Activated CD4-positive, alpha-beta T cell treated with anti-CD3 and anti-CD28 coated beads for 36 hours (primary cell): ENCODE measurements at regions of chr6 and their contacts with region 1.

Region 1: DNA sequence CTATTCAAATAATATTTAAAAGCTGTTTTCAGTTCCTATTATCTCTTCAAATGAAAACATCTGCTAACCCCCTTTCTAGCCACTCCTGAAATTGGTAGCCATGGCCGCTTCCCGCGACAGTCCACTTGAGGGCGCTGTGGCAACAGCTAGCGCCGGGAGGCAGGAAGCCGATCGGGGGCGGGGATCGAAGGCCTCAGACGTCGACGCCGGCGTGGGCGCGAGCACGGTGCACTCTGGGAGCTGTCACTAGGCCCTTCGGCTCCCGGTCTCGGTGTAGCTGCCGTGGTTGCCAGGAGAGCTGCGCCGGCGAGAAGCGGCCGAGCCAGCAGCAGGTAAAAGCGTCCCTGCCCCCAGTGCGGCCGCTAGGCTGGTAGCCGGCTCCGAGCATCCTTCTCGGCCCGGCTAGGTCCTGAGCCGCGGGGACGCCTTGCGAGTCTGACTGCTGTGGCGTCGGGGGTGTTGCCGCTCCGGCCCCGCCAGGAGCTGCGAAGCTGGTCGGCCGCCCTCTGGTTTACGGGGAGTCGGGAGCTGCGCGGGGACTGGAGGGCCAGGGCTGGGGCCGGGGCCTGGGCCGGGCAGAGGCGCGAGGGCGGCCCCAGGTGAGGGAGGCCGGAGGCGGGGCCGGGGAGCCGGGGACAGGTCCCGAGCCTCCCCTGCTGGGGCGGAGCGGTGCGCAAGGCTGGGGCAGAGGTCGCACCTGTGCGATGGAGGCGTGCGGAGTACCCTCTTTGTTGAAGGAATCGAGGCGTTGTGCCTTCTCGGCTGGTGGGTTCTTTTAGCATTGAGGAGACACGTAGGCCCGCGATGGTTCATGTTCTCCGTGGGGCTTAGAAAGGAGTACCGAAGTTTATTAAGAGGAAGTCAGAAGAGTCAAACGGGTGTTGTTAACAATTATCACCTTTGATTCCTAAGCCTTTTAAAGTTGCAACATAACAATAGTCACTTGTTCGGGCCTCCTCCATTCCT is at the start of gene DOP1A:
- DNase-seq: peak; percentile 99
- ATAC-seq: peak; percentile 87
- H3K4me3 Mint-ChIP-seq: peak within 1 kb of the TSS; percentile 88
- H3K27ac Mint-ChIP-seq: peak within 1 kb of the TSS; percentile 84
- H3K4me1 Mint-ChIP-seq: peaks cover 47% of the 10 kb centered on the region
- H3K27me3 Mint-ChIP-seq: no peaks in the 10 kb centered on the region
- total RNA-seq, gene DOP1A: 5.4 to 7.3 TPM

Region 2: GRCh38 chr6:81834141-81834681 is 1233.5 kb before region 1 on chr6:
- CTCF ChIA-PET with region 1: no interaction called
- POLR2A ChIA-PET with region 1: no interaction called
- intact Hi-C with region 1: no loop called
- DNase-seq: no peak
- ATAC-seq: no peak
- H3K4me3 Mint-ChIP-seq: no peak overlapping the region
- H3K27ac Mint-ChIP-seq: no peak overlapping the region
- H3K4me1 Mint-ChIP-seq: no peaks in the 10 kb centered on the region
- H3K27me3 Mint-ChIP-seq: peaks cover 3% of the 10 kb centered on the region

Region 3: DNA sequence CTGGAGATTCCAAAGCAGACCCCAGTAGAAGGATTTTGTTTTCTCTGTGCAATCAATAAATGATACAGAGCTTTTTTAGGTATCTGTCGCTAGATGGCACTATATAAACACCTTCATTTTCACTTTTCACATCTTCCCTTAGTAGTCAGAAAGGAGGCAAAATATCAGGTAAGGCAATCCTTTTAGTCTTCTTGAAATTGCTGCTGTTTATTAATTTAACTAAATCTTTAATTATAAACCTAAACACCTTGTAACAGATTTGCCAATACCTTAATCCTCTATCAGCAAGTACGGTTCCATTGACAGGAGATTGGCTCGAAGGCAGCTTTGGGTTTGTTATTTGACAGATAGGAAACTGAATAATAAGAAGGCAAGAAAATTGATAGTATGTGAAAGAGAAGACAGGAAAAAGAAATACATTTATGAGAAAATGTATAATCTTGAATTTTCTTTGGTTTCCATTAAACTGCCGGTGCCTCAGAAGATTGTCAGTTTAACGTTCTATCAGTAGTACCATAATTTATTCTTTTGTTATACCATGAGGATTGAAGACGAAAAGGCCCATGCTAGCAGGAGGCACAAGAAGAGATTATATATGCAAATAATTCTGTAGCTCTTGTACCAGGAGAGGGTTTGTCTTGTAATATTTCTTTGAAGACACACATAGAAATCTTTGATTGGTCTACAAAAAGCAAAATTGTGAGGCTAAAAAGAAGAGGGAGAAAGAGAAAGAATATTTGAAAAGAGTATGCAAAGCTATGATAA is 796.7 kb before region 1 on chr6:
- CTCF ChIA-PET with region 1: interaction called, 15 read pairs
- POLR2A ChIA-PET with region 1: no interaction called
- intact Hi-C with region 1: no loop called
- DNase-seq: no peak
- ATAC-seq: peak; percentile 58
- H3K4me3 Mint-ChIP-seq: no peak overlapping the region
- H3K27ac Mint-ChIP-seq: no peak overlapping the region
- H3K4me1 Mint-ChIP-seq: no peaks in the 10 kb centered on the region
- H3K27me3 Mint-ChIP-seq: peaks cover 2% of the 10 kb centered on the region

Region 4: DNA sequence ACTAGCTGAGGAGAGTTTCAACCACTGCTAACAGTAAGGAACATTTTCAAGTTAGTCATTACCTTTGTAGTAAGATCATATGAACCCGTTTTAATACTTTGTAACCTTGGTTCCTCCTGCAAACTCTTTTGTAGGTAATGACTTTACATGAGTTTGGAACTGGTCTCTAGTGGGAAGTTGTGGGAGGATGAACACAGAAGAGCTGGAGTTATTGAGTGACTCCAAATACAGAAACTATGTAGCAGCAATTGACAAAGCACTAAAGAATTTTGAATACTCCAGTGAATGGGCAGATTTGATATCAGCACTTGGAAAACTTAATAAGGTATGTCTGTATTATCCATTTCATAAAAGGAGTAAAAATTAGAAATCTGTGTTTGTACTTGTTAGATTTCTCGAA is 29.1 kb after region 1 on chr6:
- CTCF ChIA-PET with region 1: interaction called, 10 read pairs
- POLR2A ChIA-PET with region 1: no interaction called
- intact Hi-C with region 1: no loop called
- DNase-seq: no peak
- ATAC-seq: no peak
- H3K4me3 Mint-ChIP-seq: no peak overlapping the region
- H3K27ac Mint-ChIP-seq: no peak overlapping the region
- H3K4me1 Mint-ChIP-seq: peaks cover 4% of the 10 kb centered on the region
- H3K27me3 Mint-ChIP-seq: no peaks in the 10 kb centered on the region

Region 5: DNA sequence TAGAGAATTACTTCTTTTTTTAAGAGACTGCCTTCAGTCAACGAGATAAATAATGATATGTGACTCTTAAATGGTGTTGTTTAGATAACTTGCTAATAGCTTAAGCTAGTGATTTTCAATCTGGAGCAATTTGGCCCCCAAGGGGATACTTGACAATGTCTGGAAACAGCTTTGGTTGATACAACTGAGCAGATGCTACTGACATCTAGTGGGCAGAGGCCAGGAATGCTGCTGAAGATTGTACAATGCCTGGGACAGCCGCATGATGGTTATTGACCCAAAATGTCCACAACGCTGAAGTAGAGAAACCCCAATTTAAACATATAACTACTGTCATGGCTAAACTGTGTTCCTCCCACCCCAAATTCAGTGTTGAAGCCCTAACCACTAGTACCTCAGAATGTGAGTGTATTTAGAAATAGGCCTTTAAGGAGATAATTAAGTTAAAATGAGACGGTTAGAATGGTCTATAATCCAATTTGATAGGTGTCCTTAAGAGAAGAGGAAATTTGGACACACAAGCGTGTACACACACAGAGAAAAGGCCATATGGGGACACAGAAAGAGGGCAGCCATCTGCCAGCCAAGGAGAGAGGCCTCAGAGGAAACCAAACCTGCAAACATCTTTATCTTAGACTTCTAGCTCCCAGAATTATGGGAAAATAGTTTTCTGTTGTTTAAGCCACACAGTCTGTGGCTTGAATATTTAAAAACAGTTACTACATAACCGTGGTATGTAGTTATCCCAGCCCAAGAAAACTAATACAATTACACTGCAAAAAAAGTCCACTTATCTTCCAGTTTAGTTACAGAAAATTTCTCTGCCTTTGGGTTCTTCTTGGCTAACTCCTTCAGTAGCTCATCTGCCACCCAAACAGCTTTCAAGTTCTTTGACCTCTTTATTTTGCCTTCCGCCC is 147.7 kb after region 1 on chr6:
- CTCF ChIA-PET with region 1: interaction called, 101 read pairs
- POLR2A ChIA-PET with region 1: no interaction called
- intact Hi-C with region 1: loop called (anchors 1 kb)
- DNase-seq: peak; percentile 72
- ATAC-seq: peak; percentile 99
- H3K4me3 Mint-ChIP-seq: no peak overlapping the region
- H3K27ac Mint-ChIP-seq: no peak overlapping the region
- H3K4me1 Mint-ChIP-seq: peaks cover 2% of the 10 kb centered on the region
- H3K27me3 Mint-ChIP-seq: peaks cover 10% of the 10 kb centered on the region

Region 6: DNA sequence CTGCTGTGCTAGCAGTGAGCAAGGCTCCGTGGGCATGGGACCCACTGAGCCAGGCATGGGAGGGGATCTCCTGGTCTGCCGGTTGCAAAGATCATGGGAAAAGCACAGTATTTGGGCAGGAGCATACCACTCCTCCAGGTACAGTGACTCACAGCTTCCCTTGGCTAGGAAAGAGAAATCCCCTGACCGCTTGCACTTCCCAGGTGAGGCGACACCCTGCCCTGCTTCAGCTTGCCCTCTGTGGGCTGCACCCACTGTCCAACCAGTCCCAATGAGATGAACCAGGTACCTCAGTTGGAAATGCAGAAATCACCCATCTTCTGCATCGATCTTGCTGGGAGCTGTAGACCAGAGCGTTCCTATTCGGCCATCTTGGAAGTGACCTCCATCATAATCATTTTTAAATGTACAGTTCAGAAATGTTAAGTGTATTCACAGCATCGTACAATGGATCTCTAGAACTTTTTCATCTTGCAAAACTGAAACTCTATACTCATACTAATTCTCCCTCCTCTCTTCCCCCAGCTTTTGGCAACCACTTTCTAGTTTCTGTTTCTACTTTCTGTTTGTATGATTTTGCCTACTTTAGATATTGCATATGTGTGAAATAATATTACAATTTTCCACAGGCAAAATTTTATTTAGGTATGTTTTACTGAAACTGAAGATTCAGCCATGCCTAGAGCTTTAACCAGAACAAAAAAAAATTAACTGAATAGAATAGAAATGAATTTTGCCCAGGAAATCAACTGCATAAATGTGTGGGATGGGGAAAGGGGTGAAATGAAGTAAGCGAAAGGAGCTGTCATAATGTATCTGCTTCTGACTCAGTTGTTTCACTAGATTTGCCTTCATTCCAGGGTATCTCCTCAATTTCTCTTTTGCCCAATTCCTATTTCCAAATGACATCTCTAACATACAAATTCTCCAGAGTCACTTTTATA is 225.4 kb after region 1 on chr6:
- CTCF ChIA-PET with region 1: no interaction called
- POLR2A ChIA-PET with region 1: no interaction called
- intact Hi-C with region 1: loop called in 1 of 2 experiments (anchors 2 kb)
- DNase-seq: no peak
- ATAC-seq: peak; percentile 90
- H3K4me3 Mint-ChIP-seq: no peak overlapping the region
- H3K27ac Mint-ChIP-seq: no peak overlapping the region
- H3K4me1 Mint-ChIP-seq: peaks cover 11% of the 10 kb centered on the region
- H3K27me3 Mint-ChIP-seq: peaks cover 46% of the 10 kb centered on the region

Region 7: DNA sequence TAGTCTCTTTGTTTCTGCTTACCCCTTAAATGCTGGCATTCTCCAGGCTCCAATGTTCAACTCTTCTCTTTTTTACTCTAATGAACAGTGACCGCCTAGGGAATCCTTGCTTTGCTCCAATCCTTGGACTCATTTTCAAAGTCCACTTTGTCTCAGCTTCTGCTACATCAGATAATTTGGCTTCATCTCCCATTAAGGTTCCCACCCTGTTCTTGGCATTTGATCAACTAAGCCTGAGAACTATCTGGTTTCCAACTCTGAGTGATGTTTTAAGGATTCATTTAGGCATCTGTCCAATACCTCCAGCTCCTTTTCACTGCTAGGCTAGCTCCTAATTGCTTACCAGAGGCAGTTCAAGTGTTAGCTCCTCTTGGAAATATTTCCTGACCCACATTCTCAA is 298.2 kb after region 1 on chr6:
- CTCF ChIA-PET with region 1: no interaction called
- POLR2A ChIA-PET with region 1: no interaction called
- intact Hi-C with region 1: no loop called
- DNase-seq: no peak
- ATAC-seq: no peak
- H3K4me3 Mint-ChIP-seq: no peak overlapping the region
- H3K27ac Mint-ChIP-seq: no peak overlapping the region
- H3K4me1 Mint-ChIP-seq: no peaks in the 10 kb centered on the region
- H3K27me3 Mint-ChIP-seq: peaks cover 2% of the 10 kb centered on the region

Region 8: DNA sequence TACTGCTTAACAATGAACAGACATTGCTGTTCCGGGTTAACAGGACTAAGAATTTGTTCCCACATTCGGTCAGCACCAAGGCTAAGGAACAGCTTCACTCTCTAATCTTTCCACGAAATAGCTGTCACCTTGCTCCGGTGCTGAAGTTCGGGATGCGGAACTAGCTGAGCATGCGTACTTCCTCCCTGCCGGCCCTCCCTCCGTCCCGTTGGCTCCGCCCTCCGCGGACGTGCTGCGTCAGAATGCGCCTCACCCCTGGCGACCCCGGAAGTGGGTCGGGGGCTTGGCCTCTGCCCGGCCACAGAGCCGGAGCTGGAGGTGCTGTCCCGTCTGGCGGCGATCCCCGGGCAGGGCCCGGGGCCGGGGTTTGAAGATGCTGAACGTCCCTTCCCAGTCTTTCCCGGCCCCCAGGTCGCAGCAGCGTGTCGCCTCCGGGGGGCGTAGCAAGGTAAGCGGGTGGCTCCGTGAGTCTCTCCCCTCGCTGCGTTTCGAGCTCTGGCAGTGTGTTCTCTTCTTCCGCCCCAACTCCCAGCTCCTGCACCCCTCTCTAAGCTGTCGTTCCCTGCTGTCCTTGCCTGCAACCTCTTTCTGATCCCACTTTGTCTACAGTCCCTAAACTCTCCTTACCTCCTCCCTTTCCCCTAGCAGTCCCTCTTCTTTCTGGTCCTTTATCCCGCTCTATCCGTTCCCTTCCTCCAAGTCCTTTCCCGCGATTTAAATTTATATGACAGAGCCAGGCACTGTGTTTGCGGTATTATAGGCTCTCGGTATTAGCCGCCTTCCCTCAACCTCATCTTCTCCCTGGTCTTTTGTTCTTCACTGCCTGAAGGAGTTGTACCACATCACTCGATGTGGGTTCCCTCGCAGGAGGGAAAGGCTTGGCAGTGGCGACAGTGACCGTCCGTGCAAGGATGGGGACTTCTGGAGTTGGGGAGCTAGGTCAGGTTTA is 792.0 kb after region 1 on chr6 and contains the start of gene CYB5R4:
- CTCF ChIA-PET with region 1: interaction called, 3 read pairs
- POLR2A ChIA-PET with region 1: no interaction called
- intact Hi-C with region 1: loop called in 1 of 2 experiments (anchors 5 kb)
- DNase-seq: peak; percentile 96
- ATAC-seq: peak; percentile 98
- H3K4me3 Mint-ChIP-seq: peak within 1 kb of the TSS; percentile 97
- H3K27ac Mint-ChIP-seq: peak within 1 kb of the TSS; percentile 92
- H3K4me1 Mint-ChIP-seq: peaks cover 27% of the 10 kb centered on the region
- H3K27me3 Mint-ChIP-seq: peaks cover 11% of the 10 kb centered on the region
- total RNA-seq, gene CYB5R4: 21.9 to 28.2 TPM